ENCODE measurements at regions of chr3 and their contacts with region 1.

Region 1: DNA sequence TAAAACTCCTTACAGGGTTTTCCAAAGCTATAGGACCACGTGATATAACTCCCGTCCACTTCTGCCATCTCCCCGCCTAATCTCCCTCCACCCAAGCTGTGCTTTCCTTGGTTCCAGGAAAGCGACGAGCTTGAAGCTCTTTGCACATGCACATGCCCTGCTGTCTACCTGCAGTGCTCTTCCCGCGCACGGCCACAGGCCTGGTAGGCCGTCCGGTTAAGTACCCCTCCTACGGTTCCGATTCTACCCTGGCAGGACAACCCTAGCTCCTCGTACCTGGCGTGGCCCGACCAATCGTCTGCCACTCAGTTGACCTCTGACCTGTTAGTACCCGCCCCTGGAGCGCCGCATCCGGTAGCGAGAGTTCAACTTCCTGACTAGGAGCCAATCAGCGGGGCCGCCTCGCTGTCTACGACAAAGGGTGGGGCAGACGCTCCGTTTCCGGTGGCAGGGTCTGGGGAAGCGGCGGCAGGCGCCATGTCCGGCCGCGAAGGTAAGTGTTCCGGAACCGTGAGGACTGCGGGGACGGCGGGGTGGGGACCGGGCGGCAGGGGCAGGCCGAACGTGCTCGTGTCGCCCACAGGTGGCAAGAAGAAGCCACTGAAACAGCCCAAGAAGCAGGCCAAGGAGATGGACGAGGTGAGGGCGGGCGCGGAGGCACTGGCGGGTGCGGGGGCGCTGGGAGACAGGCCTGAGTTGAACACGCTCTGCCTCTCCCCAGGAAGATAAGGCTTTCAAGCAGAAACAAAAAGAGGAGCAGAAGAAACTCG is at the starts of genes CCDC51 and TMA7:
- DNase-seq: peak; percentile 99
- H3K4me3 Mint-ChIP-seq: peak within 1 kb of the TSS; percentile 90
- H3K27ac Mint-ChIP-seq: peak within 1 kb of the TSS; percentile 87
- H3K4me1 Mint-ChIP-seq: peaks cover 32% of the 10 kb centered on the region
- H3K27me3 Mint-ChIP-seq: no peaks in the 10 kb centered on the region
- total RNA-seq, gene CCDC51: 24.3 to 24.4 TPM
- total RNA-seq, gene TMA7: 318 to 323 TPM

Region 2: DNA sequence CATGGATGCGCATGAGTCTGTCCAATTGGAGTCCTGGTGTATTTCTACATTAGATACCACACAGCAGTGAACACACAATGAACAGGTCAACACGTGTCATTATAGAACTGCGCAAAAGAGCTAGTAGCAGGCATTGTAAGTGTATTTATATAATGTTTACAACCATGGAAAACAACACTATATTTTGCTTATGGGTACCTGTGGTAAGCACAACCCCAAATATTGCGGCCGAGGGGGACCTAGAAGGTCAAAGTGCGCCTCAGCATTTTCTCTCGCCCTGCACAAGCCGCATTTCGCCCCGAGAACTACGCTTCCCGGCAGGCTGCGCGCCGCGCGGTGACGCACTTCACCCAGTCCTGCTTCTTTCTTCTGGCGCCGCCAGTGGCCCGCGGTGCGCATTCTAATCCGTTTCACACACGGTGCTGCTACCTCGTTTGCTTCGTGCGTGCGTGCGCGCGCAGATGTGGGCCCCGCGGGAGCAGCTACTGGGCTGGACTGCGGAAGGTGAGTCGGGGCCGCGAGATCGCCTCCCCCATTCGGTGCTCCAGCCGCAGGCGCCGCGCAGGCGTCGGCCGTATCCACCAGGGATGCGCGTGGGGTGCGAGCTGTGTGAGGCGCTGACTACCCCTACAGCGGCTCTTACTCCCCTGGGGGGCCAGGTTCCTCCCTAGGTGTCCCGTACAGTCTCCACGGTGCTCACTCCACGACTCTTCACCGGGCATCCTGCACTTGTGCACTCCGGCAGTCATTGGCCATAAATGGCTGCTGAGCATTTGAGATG is 199.1 kb before region 1 on chr3 and contains the start of gene ZNF589:
- CTCF ChIA-PET with region 1: interaction called, 43 read pairs
- POLR2A ChIA-PET with region 1: interaction called, 3 read pairs
- intact Hi-C with region 1: loop called (anchors 1 kb)
- DNase-seq: peak; percentile 96
- H3K4me3 Mint-ChIP-seq: peak within 1 kb of the TSS; percentile 88
- H3K27ac Mint-ChIP-seq: peak within 1 kb of the TSS; percentile 92
- H3K4me1 Mint-ChIP-seq: peaks cover 21% of the 10 kb centered on the region
- H3K27me3 Mint-ChIP-seq: no peaks in the 10 kb centered on the region
- total RNA-seq, gene ZNF589: 28.0 to 31.4 TPM

Region 3: DNA sequence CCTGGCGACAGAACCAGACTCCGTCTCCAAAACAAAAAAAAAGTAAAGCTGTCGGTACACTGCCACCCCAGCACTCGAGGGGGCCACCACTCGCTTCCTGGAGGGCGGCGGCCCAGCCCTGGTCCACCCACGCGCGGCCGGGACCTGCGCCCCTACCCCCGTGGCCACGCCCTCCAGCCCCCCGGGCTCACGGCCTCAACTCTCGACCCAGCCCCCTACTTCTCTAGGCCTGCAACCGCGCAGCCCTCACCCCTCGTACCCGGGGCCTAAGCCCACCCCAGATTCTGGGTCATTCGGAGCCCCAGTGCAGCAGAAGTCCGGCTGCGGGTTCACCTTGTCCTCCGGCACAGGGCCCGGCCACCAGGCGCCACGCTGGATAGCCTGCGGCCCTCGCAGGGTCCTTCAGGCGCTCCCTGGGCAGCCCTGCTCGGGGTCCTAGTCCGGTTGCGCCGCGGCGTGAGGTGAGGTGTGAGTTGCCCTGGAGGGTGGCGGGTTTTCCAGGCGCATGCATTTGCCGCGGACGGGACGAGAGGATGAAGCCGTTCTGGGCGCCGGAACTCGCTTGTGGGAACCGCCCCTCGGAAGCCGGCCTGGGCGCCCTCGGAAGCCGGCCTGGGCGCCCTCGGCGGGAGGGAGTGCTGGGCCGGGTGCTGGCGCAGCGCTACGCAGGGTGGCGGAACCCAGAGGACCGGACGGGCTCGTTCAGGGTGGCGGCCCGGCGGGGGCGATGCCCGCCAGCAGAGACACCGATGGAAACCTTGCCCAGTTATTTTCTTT is 138.8 kb before region 1 on chr3:
- CTCF ChIA-PET with region 1: interaction called, 14 read pairs
- POLR2A ChIA-PET with region 1: no interaction called
- intact Hi-C with region 1: no loop called
- DNase-seq: peak; percentile 95
- H3K4me3 Mint-ChIP-seq: peak within 1 kb of the TSS; percentile 96
- H3K27ac Mint-ChIP-seq: peak within 1 kb of the TSS; percentile 98
- H3K4me1 Mint-ChIP-seq: peaks cover 34% of the 10 kb centered on the region
- H3K27me3 Mint-ChIP-seq: no peaks in the 10 kb centered on the region

Region 4: GRCh38 chr3:48429317-48429959 is 10.6 kb before region 1 on chr3:
- CTCF ChIA-PET with region 1: interaction called, 70 read pairs
- POLR2A ChIA-PET with region 1: interaction called, 3 read pairs
- intact Hi-C with region 1: no loop called
- DNase-seq: peak; percentile 61
- H3K4me3 Mint-ChIP-seq: peak overlapping the region; percentile 69
- H3K27ac Mint-ChIP-seq: no peak overlapping the region
- H3K4me1 Mint-ChIP-seq: peaks cover 4% of the 10 kb centered on the region
- H3K27me3 Mint-ChIP-seq: no peaks in the 10 kb centered on the region

Region 5: DNA sequence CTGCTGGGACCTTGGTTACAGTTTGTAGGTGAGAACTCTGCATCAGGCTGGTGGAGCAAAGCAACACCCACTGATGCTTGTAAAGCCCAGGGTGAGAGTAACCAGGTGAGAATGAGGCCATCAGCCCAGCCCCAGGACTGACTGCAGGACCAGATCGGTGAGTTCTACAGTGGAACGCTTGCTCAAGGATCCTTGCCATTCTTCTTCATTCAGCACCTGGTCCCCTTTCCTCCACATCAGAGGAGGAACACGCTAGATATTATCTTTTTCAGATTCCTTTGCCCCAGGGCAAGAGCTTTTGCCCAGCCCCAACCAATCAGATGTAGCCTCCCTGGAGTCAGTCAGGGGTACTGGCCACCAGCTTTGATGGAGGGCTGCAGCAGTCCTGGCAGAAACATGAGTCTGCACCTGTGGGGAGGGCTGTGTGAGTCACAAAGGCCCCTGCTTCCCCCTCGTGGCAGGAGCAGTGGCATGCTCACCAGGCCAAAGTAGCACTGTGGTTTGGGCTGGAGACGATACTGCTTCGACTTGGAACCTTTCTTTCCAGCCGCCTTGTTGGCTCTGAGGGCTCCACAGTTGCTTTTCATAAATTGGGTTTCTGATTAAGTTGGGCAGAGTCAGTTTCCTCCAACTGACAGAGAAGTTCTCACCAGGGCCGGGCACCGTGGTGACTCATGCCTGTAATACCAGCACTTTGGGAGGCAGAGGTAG is 67.5 kb after region 1 on chr3:
- CTCF ChIA-PET with region 1: interaction called, 18 read pairs
- POLR2A ChIA-PET with region 1: no interaction called
- intact Hi-C with region 1: no loop called
- DNase-seq: peak; percentile 84
- H3K4me3 Mint-ChIP-seq: no peak overlapping the region
- H3K27ac Mint-ChIP-seq: peak overlapping the region; percentile 74
- H3K4me1 Mint-ChIP-seq: peaks cover 42% of the 10 kb centered on the region
- H3K27me3 Mint-ChIP-seq: no peaks in the 10 kb centered on the region

Region 6: GRCh38 chr3:48635222-48636021 is 195.4 kb after region 1 on chr3 and contains the start of gene SLC26A6:
- CTCF ChIA-PET with region 1: interaction called, 11 read pairs
- POLR2A ChIA-PET with region 1: interaction called, 5 read pairs
- intact Hi-C with region 1: no loop called
- DNase-seq: peak; percentile 97
- H3K4me3 Mint-ChIP-seq: peak within 1 kb of the TSS; percentile 89
- H3K27ac Mint-ChIP-seq: no peak within 1 kb of the TSS
- H3K4me1 Mint-ChIP-seq: peaks cover 18% of the 10 kb centered on the region
- H3K27me3 Mint-ChIP-seq: no peaks in the 10 kb centered on the region
- total RNA-seq, gene SLC26A6: 47.7 to 52.4 TPM